Activated CD8-positive, alpha-beta T cell treated with anti-CD3 and anti-CD28 coated beads for 36 hours (primary cell): ENCODE measurements at regions of chr5 and their contacts with region 1.

Region 1: DNA sequence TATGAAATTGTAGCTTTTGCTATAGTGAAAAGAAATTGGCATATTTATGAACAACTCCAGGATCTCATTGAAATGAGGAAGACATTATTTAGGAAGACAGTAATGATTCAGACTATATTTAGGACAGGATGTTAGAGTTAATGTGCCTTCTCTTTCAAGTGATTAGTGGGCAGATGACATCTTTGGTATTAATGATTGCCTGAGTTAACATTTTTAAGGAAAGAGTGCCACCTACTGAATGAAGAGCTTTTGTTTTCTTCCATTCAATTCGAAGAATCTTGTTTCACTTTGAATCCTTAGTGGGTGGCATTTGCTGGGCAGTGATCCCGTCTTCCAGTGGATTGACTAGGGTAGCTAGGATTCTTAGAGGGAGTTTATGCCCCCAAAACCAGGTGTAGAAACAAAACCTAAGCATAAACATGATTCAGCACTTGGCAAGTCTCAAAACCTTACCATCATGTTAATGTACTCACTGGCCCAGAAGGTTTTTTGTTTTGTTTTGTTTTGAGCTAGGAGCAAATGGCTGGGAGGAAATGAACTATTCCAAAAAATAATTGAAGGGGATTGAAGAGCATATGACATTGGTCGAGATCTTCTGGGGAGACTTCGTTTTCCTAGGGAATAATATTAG is 23.2 kb downstream of the MAP3K1 start:
- DNase-seq: no peak
- ATAC-seq: peak; percentile 72
- H3K4me3 Mint-ChIP-seq: peak overlapping the region; percentile 51
- H3K27ac Mint-ChIP-seq: peak overlapping the region; percentile 68
- H3K4me1 Mint-ChIP-seq: peaks cover 59% of the 10 kb centered on the region
- H3K27me3 Mint-ChIP-seq: no peaks in the 10 kb centered on the region
- CTCF ChIP-seq: peak; percentile 60

Region 2: DNA sequence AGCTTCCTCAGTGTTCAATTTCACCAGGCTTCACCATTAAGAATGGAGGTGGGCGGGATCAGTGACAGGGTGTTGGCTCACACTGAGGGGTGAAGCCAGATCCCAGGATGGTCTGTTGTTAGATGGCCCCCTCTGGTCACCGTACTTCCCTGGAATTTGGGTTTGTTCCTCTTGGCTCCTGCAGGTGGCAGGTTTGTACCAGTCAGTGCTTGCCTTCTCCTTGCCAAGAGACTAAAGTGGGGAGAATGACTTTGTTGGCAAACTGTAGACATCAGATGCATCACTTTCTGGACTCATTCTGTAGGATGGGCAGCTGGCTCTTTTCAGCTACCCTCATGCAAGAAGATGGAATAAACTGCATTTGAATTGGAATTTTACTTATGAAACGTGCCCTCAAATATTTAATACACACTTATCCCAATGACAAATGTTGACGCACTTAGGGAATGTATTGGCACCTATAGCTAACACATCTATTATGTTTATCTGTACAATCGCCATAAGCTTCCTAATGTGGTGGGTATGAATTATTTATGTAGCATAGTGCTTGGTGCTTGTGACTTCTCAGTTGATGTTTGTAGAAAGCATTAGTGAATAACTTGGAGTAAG is 574.0 kb before region 1 on chr5:
- CTCF ChIA-PET with region 1: interaction called, 88 read pairs
- POLR2A ChIA-PET with region 1: no interaction called
- intact Hi-C with region 1: no loop called
- DNase-seq: peak; percentile 24
- ATAC-seq: peak; percentile 51
- H3K4me3 Mint-ChIP-seq: no peak overlapping the region
- H3K27ac Mint-ChIP-seq: no peak overlapping the region
- H3K4me1 Mint-ChIP-seq: peaks cover 2% of the 10 kb centered on the region
- H3K27me3 Mint-ChIP-seq: peaks cover 3% of the 10 kb centered on the region
- CTCF ChIP-seq: peak; percentile 61

Region 3: DNA sequence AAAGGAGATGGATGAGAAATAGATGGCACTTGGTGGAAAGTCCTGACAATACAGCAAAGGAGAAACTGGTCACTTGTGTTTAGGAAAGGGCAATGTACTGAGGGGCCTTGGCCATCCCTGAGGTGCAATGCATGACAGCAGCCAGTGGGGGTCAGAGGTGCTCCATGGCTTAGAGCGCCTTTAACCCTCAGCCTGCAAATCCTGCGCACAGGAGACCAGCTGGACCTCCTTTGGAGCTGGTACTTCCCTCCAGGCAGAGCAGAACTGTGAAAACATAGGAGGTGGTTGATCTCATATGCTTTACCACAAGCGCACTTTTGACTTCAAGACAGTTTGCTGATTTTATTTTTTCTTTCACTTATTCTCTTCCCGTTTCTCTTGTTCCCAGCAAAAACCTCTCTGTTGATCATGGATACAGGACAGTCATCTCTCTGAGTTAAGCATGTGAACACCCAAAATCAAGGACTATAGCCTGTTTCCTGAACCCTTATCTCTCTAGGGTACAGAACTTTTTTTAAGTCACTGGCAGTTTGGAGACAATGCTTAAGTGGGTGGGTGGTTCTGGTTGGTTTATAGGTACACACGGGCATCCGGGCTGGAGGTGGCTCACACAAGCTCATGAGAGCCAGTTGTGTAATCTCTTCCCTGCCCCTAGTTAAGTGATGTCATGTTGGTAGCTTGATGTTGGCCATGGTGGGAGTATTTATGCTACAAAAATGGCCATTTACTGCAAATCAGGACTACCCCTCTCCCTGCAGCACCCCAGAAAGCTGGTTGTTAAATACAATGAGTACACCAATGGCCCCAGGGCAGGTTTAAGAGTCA is 567.7 kb before region 1 on chr5:
- CTCF ChIA-PET with region 1: interaction called, 88 read pairs
- POLR2A ChIA-PET with region 1: interaction called, 5 read pairs
- intact Hi-C with region 1: loop called (anchors 1 kb)
- DNase-seq: peak; percentile 82
- ATAC-seq: peak; percentile 99
- H3K4me3 Mint-ChIP-seq: no peak overlapping the region
- H3K27ac Mint-ChIP-seq: peak overlapping the region; percentile 31
- H3K4me1 Mint-ChIP-seq: peaks cover 18% of the 10 kb centered on the region
- H3K27me3 Mint-ChIP-seq: peaks cover 3% of the 10 kb centered on the region
- CTCF ChIP-seq: peak; percentile 97

Region 4: DNA sequence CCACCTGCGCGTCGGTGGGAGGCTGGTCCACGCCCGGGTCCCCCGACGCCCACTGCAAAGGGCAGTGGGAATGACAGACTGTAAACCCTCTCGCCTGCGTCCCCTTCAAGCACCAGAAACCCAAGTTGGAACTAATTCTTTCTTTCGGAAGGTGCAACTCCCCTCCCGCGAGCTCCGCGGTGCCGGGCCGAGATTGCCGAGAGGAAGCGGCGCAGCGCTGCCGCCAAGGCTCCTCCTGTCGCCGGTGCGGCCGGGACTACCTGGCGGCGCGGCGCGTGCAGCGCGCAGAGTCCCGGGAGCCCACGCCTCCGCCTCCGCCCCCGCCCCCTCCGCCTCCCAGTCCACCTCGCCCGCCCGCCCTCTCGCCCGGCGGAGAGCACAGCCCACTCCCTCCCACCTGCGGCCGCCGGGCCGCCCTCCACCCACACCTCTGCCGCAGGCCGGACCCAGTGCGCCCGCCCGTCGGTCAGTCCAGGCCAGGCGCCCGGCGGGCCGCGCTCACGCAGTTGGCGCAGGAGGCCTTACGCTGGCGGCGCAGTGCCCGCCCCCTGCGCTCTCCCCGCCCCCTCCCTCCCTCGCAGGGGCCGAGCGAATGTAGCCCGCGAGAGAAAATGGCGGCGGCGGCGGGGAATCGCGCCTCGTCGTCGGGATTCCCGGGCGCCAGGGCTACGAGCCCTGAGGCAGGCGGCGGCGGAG is 23.4 kb before region 1 on chr5 and contains the start of gene MAP3K1:
- CTCF ChIA-PET with region 1: interaction called, 11 read pairs
- POLR2A ChIA-PET with region 1: no interaction called
- intact Hi-C with region 1: no loop called
- DNase-seq: peak; percentile 73
- ATAC-seq: peak; percentile 72
- H3K4me3 Mint-ChIP-seq: peak within 1 kb of the TSS; percentile 87
- H3K27ac Mint-ChIP-seq: peak within 1 kb of the TSS; percentile 92
- H3K4me1 Mint-ChIP-seq: peaks cover 39% of the 10 kb centered on the region
- H3K27me3 Mint-ChIP-seq: peaks cover 5% of the 10 kb centered on the region
- CTCF ChIP-seq: no peak
- total RNA-seq, gene MAP3K1: 16.9 to 17.0 TPM

Region 5: DNA sequence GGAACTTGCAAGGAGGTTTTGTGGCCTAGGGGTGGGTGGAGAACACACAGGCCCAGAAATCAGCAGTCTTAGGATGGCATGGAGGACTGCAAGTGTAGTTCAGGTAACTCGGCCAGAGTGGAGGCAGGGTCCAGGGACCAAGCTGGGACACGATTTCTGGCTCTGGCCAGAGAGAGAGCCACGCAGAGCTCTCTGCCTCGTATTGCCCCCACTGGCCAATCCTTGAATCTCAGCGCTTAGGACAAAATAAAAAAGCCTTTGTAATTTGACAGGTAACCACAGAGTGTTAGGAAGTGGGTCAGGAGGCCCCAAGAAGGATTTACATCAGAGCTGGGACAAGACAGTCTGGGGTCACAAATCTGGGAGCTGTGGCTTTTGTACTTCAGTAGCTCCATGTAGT is 11.5 kb before region 1 on chr5:
- CTCF ChIA-PET with region 1: interaction called, 29 read pairs
- POLR2A ChIA-PET with region 1: no interaction called
- intact Hi-C with region 1: no loop called
- DNase-seq: peak; percentile 15
- ATAC-seq: peak; percentile 42
- H3K4me3 Mint-ChIP-seq: no peak overlapping the region
- H3K27ac Mint-ChIP-seq: no peak overlapping the region
- H3K4me1 Mint-ChIP-seq: peaks cover 82% of the 10 kb centered on the region
- H3K27me3 Mint-ChIP-seq: no peaks in the 10 kb centered on the region
- CTCF ChIP-seq: no peak

Region 6: GRCh38 chr5:56854920-56855319 is 16.4 kb after region 1 on chr5:
- CTCF ChIA-PET with region 1: interaction called, 13 read pairs
- POLR2A ChIA-PET with region 1: interaction called, 3 read pairs
- intact Hi-C with region 1: no loop called
- DNase-seq: no peak
- ATAC-seq: no peak
- H3K4me3 Mint-ChIP-seq: no peak overlapping the region
- H3K27ac Mint-ChIP-seq: no peak overlapping the region
- H3K4me1 Mint-ChIP-seq: peaks cover 46% of the 10 kb centered on the region
- H3K27me3 Mint-ChIP-seq: no peaks in the 10 kb centered on the region
- CTCF ChIP-seq: no peak

Region 7: DNA sequence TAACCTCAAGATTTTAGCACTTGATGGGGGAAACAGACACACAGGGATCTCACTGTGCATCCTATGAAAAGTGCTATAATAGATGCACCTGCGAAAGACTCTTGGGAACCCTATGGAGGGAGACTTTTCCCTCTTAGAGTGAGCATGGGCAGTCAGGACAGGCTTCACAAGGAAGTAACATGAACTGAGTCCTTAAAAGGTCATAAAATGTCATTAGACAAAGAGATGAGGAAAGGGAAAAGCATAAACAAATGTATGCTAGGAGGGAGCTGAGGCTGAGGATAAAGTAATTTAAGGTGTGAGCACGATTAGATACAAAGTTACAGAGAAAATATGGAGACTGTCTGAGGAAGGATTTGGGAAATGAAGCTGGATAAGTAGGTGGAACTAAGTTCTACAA is 174.0 kb after region 1 on chr5:
- CTCF ChIA-PET with region 1: no interaction called
- POLR2A ChIA-PET with region 1: no interaction called
- intact Hi-C with region 1: no loop called
- DNase-seq: no peak
- ATAC-seq: no peak
- H3K4me3 Mint-ChIP-seq: no peak overlapping the region
- H3K27ac Mint-ChIP-seq: no peak overlapping the region
- H3K4me1 Mint-ChIP-seq: no peaks in the 10 kb centered on the region
- H3K27me3 Mint-ChIP-seq: no peaks in the 10 kb centered on the region
- CTCF ChIP-seq: no peak